Body of pancreas (tissue), 4 donors: ENCODE measurements at regions of chr11 and their contacts with region 1.

Region 1: GRCh38 chr11:34366522-34366921 is 8.7 kb upstream of the ABTB2 start:
- DNase-seq: peak; percentile 50 to 72 (median 60)
- ATAC-seq: peak; percentile 50
- H3K4me3 ChIP-seq: no peak overlapping the region
- H3K27ac ChIP-seq: no peak overlapping the region
- H3K4me1 ChIP-seq: no peaks in the 10 kb centered on the region
- H3K27me3 ChIP-seq: no peaks in the 10 kb centered on the region
- CTCF ChIP-seq: peak in 6 of 7 experiments; percentile 44 to 65 (median 61)
- POLR2A ChIP-seq: no peak

Region 2: GRCh38 chr11:33996498-33997454 is 369.7 kb before region 1 on chr11:
- intact Hi-C with region 1: loop called (anchors 10 kb)
- DNase-seq: peak; percentile 75 to 83 (median 81)
- ATAC-seq: peak; percentile 99
- H3K4me3 ChIP-seq: no peak overlapping the region
- H3K27ac ChIP-seq: no peak overlapping the region
- H3K4me1 ChIP-seq: peaks cover 8% of the 10 kb centered on the region
- H3K27me3 ChIP-seq: no peaks in the 10 kb centered on the region
- CTCF ChIP-seq: peak; percentile 52 to 87 (median 83)
- POLR2A ChIP-seq: no peak

Region 3: DNA sequence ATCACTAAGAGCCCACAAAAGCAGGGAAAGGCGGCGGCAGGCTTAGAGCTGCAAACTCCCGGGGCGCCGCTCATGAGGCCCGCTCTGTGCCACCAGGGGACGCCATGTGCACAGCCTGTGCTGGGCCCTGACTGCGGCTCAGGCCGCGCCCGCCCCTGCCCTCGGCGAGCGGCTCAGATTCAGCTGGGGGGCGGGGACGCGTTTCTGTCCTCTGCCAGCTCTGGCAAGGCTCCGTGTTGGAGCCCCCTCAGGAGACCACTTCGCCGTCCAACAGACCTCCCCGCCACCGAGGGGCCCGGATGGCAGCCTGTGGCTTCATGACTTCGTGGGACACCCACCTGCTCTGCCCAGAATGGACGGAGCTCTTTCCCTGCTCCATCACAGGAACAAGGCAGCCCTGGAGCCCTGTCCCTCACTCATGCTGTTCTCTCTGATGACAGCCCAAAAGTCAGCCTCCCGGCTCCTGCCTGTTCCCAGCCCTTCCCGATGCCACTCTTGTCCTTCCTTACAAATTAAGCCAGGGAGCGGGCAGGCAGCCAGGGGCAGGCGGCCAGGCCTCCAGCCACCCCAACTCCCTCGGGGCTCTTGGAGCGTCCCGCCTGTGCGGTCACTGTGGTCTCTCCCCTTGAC is 192.0 kb before region 1 on chr11:
- intact Hi-C with region 1: loop called (anchors 2 kb)
- DNase-seq: peak; percentile 83 to 89 (median 84)
- ATAC-seq: peak; percentile 95
- H3K4me3 ChIP-seq: no peak overlapping the region
- H3K27ac ChIP-seq: peak overlapping the region in 2 of 4 donors; percentile 6 to 7
- H3K4me1 ChIP-seq: peaks cover 14% of the 10 kb centered on the region
- H3K27me3 ChIP-seq: no peaks in the 10 kb centered on the region
- CTCF ChIP-seq: peak; percentile 87 to 98 (median 96)
- POLR2A ChIP-seq: no peak

Region 4: GRCh38 chr11:34492806-34493414 is 126.4 kb after region 1 on chr11:
- intact Hi-C with region 1: loop called (anchors 5 kb)
- DNase-seq: peak; percentile 71 to 85 (median 76)
- ATAC-seq: peak; percentile 52
- H3K4me3 ChIP-seq: no peak overlapping the region
- H3K27ac ChIP-seq: no peak overlapping the region
- H3K4me1 ChIP-seq: no peaks in the 10 kb centered on the region
- H3K27me3 ChIP-seq: no peaks in the 10 kb centered on the region
- CTCF ChIP-seq: peak; percentile 24 to 81 (median 78)
- POLR2A ChIP-seq: no peak